Activated CD8-positive, alpha-beta T cell treated with anti-CD3 and anti-CD28 coated beads, Interleukin-2, amount 10 ng/mL, durations not matched to agents 7 days and 5 days (primary cell): ENCODE measurements at regions of chr14 and their contacts with region 1.

Region 1: DNA sequence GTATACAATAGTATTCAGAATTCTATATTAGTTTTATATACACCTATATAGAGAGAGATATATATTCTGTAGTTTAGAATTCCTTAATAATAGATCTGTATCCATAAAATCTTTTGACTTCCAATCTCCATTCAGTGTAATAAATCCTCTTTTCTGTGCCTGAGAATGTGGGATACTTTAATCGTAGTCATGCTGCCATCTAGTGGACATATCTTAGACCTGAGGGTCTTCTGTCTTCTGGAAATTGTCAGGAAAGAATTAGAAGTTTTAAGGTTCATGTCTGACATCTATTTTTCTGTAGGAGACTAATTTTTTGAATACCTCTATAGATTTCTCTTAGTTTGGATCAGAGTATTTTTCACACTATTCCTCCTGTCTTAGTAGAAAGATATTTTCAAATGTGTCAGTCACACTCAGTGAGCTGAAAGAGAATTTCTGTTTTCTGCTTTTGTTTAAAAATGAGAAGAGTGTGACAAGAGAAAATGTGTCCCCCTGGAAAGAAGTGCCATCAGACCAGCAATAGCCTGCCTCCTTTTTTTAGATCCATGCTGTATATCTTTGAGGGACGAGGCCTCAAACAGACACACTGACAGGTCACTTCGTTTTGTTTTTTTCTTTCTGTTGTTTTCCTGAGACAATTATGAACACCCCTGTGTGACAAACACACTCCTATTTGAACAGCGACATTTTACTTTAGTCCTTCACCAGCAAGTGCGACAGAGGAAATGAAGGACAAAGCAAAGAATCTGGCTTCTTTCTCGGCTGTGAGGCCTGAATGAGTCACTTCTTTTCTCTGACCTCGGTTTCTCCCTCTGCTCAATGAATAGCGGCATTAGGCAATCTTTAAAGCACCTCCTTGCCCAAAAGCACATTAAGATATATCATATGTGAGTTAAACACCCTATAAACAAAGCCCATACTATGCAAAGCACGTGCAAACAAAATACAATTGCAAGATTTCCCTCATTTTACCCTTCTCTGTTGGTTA is 96.3 kb downstream of the GALC start:
- DNase-seq: peak; percentile 25
- ATAC-seq: no peak
- H3K4me3 Mint-ChIP-seq: no peak overlapping the region
- H3K27ac Mint-ChIP-seq: no peak overlapping the region
- H3K4me1 Mint-ChIP-seq: no peaks in the 10 kb centered on the region
- H3K27me3 Mint-ChIP-seq: peaks cover 28% of the 10 kb centered on the region

Region 2: DNA sequence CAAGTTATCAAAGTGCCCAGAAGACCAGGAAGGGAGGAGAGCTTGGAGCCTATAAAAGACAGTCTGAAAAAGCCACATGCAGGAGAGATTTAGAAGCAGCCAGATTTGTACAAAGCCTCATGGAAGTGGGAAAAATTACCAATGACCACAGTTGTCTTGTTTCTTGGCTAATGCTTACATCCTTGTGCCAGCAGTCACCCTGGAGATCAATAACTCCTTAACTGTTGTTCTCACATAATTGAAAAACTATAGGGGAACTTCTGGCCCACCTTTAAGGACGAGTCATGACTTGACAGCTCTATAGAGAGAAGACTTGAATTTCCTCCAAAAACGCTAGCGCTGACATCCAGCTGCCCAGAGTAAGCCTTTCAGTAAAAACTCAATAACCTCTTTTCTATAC is 216.8 kb before region 1 on chr14:
- CTCF ChIA-PET with region 1: no interaction called
- POLR2A ChIA-PET with region 1: no interaction called
- DNase-seq: no peak
- ATAC-seq: no peak
- H3K4me3 Mint-ChIP-seq: no peak overlapping the region
- H3K27ac Mint-ChIP-seq: no peak overlapping the region
- H3K4me1 Mint-ChIP-seq: no peaks in the 10 kb centered on the region
- H3K27me3 Mint-ChIP-seq: no peaks in the 10 kb centered on the region

Region 3: GRCh38 chr14:87745507-87746118 is 151.1 kb before region 1 on chr14:
- CTCF ChIA-PET with region 1: interaction called, 20 read pairs
- POLR2A ChIA-PET with region 1: no interaction called
- DNase-seq: peak; percentile 22
- ATAC-seq: no peak
- H3K4me3 Mint-ChIP-seq: no peak overlapping the region
- H3K27ac Mint-ChIP-seq: no peak overlapping the region
- H3K4me1 Mint-ChIP-seq: no peaks in the 10 kb centered on the region
- H3K27me3 Mint-ChIP-seq: no peaks in the 10 kb centered on the region

Region 4: GRCh38 chr14:87805315-87805723 is 91.4 kb before region 1 on chr14:
- CTCF ChIA-PET with region 1: interaction called, 30 read pairs
- POLR2A ChIA-PET with region 1: no interaction called
- DNase-seq: peak; percentile 67
- ATAC-seq: peak; percentile 65
- H3K4me3 Mint-ChIP-seq: no peak overlapping the region
- H3K27ac Mint-ChIP-seq: no peak overlapping the region
- H3K4me1 Mint-ChIP-seq: no peaks in the 10 kb centered on the region
- H3K27me3 Mint-ChIP-seq: no peaks in the 10 kb centered on the region

Region 5: DNA sequence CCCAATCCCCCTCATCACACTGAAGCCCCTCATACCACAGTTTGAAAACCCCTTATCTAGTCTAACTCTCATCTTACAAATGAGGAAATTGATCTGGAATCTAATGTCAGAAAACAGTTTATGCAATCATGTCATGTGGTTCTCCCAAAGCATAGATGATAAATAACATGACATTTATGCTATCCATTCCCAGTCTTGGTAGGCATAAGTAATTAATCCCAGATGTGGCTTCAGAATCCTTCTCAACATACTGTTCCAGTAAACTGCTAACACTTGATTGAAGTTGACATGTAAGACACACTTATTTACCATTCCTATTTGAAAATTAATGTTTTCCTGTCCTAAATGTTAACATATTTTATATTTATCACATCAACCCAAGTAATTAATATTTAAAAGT is 72.4 kb before region 1 on chr14:
- CTCF ChIA-PET with region 1: no interaction called
- POLR2A ChIA-PET with region 1: no interaction called
- DNase-seq: no peak
- ATAC-seq: no peak
- H3K4me3 Mint-ChIP-seq: no peak overlapping the region
- H3K27ac Mint-ChIP-seq: no peak overlapping the region
- H3K4me1 Mint-ChIP-seq: no peaks in the 10 kb centered on the region
- H3K27me3 Mint-ChIP-seq: peaks cover 3% of the 10 kb centered on the region

Region 6: GRCh38 chr14:87966816-87967215 is 70.1 kb after region 1 on chr14:
- CTCF ChIA-PET with region 1: no interaction called
- POLR2A ChIA-PET with region 1: no interaction called
- DNase-seq: no peak
- ATAC-seq: no peak
- H3K4me3 Mint-ChIP-seq: no peak overlapping the region
- H3K27ac Mint-ChIP-seq: no peak overlapping the region
- H3K4me1 Mint-ChIP-seq: peaks cover 5% of the 10 kb centered on the region
- H3K27me3 Mint-ChIP-seq: no peaks in the 10 kb centered on the region